ENCODE measurements at regions of chr9 and their contacts with region 1.

Region 1: GRCh38 chr9:98429613-98430012 is 174.2 kb upstream of the TBC1D2 start:
- DNase-seq: no peak
- H3K4me3 ChIP-seq: no peak overlapping the region
- H3K27ac ChIP-seq: no peak overlapping the region
- H3K4me1 ChIP-seq: no peaks in the 10 kb centered on the region
- H3K27me3 ChIP-seq: no peaks in the 10 kb centered on the region
- CTCF ChIP-seq: no peak

Region 2: DNA sequence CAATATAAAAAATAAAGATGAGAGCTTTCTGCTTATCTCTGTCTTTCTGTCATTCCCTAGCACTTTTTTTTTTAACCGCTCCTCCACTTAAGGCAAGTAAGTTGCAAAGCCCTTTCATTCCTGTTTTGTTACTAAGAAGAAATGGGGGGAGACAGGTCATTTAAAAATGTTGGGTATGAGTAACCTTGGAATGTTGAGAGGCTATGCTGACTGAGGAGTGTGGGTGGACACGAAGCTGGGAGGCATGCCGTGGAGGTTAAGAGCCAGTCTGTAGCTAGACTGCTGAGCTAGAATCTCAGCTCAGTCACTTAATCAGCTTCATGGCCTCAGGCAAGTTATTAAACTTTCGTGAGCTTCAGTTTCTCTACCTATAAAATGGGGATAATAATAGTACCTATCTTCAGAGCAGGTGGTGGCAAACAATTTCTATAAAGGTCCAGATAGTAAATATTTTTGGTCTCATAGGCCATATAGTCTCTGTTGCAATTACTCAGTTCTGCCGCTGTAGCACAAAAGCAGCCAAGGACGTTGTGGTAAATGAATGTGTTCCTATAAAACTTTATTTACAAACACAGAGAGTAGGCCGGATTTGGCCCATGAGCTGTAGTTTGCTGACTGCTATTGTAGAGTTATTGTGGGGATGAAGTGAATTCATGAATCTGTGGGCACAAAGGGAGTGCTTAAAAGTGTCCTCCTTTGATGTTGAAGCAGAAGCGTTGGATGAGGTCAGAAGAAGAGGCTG is 59.1 kb after region 1 on chr9:
- intact Hi-C with region 1: loop called (anchors 10 kb)
- DNase-seq: no peak
- H3K4me3 ChIP-seq: no peak overlapping the region
- H3K27ac ChIP-seq: no peak overlapping the region
- H3K4me1 ChIP-seq: no peaks in the 10 kb centered on the region
- H3K27me3 ChIP-seq: no peaks in the 10 kb centered on the region
- CTCF ChIP-seq: no peak

Region 3: DNA sequence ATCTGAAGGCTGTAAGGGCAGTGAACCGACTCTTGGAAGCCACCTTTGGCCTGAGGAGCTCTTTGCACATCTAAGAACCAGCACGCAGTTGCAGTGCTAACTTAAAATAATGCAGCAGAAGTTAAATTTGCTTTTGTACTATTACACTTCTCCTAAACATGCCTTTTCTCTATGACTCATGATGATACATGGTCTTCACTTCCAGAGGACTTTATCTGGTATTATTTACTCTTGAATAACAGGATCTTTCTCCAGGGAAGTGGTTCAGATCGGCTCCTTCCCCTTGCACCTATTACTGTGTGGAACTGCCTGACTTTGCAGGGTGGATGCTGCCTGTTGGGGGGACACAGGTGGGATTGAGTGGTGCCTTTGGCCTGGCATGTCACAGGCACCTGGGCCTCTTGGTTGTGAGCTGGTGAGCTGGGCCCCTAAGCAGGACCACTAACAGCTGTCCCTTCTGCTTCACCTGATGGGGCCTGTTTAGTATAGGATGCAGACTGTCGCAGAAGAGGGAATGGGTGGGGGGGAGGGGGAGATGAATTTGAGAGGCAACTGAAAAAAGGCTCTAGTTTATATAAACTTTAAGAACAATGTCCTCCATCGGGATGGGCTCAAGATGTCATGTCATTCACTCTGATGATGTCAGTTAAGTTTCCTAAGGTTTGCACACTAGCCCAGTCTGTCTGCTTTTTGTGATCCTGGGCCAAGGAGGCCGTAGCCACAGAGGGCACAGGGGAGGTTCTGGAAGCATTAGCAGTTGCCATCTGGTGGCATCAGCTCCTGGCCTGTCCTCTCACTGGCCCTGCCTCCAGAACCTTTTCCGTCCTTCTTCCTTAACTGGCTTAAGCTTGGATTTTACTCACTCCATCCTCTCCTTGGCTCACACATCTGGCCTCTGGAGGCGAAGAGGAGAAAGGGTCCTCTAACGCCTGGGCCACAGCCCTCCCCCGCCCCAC is 313.0 kb after region 1 on chr9:
- intact Hi-C with region 1: no loop called
- DNase-seq: no peak
- H3K4me3 ChIP-seq: no peak overlapping the region
- H3K27ac ChIP-seq: no peak overlapping the region
- H3K4me1 ChIP-seq: no peaks in the 10 kb centered on the region
- H3K27me3 ChIP-seq: no peaks in the 10 kb centered on the region
- CTCF ChIP-seq: no peak

Region 4: GRCh38 chr9:98974994-98975712 is 545.5 kb after region 1 on chr9:
- intact Hi-C with region 1: no loop called
- DNase-seq: peak; percentile 89
- H3K4me3 ChIP-seq: no peak overlapping the region
- H3K27ac ChIP-seq: no peak overlapping the region
- H3K4me1 ChIP-seq: peaks cover 3% of the 10 kb centered on the region
- H3K27me3 ChIP-seq: no peaks in the 10 kb centered on the region
- CTCF ChIP-seq: peak; percentile 97